ENCODE measurements at regions of chr3 and their contacts with region 1.

Region 1: DNA sequence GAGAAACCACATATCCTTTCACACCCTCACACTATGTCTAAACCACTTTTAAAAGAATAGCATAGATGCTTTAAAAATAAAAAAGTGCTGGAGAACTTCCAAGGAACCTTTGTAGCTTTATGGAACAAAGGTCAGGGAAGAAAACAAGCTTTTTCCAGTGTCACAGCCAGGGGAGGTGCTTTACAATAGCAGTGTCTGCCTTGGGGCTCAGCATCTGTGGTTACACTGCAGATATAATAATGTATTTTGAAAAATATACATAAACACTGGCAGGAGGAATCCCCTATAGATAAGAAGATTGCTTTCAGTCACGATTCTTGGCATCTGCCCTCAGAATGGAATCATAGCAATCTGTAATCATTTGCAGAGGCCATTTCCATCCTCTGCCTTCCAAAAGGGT is 362.4 kb upstream of the LRRC3B start:
- DNase-seq: no peak
- H3K4me3 ChIP-seq: no peak overlapping the region
- CTCF ChIP-seq: no peak

Region 2: DNA sequence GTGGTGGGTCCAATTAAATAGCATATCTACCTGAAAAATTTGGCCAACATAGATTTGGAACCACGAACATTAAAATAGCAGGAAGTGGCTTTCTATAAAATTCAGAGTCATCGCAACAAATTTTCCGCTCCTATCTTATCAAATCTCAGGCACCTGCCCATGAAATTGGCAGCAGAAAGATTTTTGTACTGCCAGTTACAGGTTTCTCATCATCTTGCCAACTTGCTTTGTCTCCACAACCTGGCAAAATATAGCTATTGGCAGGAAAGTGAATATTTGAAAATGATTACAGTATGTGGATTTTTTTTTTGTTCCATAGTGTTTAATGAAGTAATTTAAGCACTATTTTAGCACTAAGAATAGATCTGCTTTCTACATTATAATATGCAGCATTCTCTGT is 200.8 kb after region 1 on chr3:
- in situ Hi-C with region 1: loop called (anchors 10 kb)
- DNase-seq: no peak
- H3K4me3 ChIP-seq: no peak overlapping the region
- CTCF ChIP-seq: no peak

Region 3: DNA sequence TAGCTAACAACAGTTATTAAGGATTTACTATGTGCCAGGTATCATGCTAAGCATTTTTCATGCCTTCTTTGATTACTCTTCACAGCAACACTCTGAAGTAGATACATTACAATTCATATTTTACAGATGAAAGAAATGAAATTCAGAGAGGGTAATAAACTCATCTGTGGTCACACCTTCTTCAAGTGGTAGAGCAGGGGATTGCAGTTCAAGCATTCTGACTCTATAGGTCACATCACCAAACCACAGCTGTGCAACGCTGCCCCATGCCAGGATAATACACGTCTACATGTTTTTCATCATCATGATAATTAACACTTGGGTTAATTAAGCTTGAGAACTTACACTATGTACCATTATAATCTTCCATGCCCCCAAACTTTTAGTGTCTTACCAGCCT is 460.9 kb after region 1 on chr3:
- in situ Hi-C with region 1: no loop called
- DNase-seq: no peak
- H3K4me3 ChIP-seq: no peak overlapping the region
- CTCF ChIP-seq: no peak

Measured in astrocyte of the cerebellum (primary cell).